CD4-positive, alpha-beta memory T cell (primary cell): ENCODE measurements at regions of chr6 and their contacts with region 1.

Region 1: DNA sequence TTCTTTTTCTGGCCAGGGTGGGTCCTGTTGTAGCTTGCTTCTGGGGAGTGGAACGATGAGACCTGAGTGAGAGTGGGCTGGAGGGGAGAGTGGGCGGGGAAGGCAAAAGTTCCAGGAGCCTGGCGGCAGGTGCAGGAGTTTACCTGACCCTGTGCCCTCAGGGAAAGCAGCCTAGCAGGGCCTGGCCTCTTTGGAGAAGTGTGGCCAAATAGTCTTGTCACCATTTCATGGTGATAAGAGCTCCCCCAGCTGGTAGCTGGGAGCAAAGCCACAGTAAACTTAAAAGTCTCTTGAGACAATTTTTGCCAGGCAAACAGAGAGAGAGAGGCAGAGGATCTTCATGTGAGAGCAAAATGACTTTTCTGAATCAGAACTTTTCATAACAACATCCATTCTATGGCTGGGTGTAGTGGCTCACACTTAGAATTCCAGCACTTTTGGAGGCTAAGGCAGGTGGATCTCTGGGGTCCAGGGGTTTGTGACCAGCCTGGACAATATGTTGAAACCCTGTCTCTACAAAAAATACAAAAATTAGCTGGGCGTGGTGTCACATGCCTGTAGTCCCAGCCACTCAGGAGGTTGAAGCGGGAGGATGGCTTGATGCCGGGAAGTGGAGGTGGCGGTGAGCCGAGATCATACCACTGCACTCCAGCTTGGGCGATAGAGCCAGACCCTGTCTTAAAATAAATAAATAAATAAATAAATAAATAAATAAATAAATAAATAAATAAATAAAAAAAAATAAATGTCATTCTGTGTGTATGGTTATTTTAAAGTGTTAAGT is 161.8 kb upstream of the SCGN start:
- DNase-seq: peak; percentile 60 to 68 (median 63)
- H3K4me3 ChIP-seq: no peak overlapping the region
- H3K4me3 Mint-ChIP-seq: no peak overlapping the region
- H3K27ac ChIP-seq: no peak overlapping the region
- H3K27ac Mint-ChIP-seq: peak overlapping the region in 2 of 7 donors; percentile 62 to 79
- H3K4me1 ChIP-seq: no peaks in the 10 kb centered on the region
- H3K4me1 Mint-ChIP-seq: peaks cover 0 to 9% (median 3%) of the 10 kb centered on the region in 4 donors
- H3K27me3 ChIP-seq: no peaks in the 10 kb centered on the region
- H3K27me3 Mint-ChIP-seq: no peaks in the 10 kb centered on the region

Region 2: DNA sequence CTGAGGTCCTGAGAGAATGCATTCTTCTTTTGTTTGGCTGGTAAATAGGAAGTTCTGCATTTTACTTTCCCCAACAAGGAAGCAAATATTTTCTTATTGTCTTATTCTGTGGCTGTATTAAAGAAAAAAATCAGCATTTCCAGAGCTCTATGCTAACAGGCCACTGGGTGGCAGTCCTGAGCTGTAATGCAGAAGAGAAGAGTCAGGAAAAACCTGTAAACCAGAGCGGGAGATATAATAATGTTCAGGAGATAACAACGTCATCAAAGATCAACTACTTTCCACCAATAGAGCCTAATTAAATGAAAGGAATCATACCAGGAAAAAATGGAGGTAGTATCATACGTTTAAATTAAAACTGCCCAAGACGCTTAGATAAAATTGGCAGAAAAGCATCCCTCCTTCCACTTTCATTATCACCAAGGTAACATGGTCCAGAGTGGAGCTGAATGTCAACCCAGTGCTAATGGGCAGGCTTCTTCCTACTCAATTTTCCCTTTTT is 266.7 kb before region 1 on chr6:
- CTCF ChIA-PET with region 1: interaction called, 28 read pairs
- POLR2A ChIA-PET with region 1: no interaction called
- intact Hi-C with region 1: loop called (anchors 1 kb)
- DNase-seq: peak; percentile 50 to 56 (median 54)
- H3K4me3 ChIP-seq: no peak overlapping the region
- H3K4me3 Mint-ChIP-seq: peak overlapping the region; percentile 40 to 74 (median 56)
- H3K27ac ChIP-seq: no peak overlapping the region
- H3K27ac Mint-ChIP-seq: peak overlapping the region in 2 of 7 donors; percentile 1 to 4
- H3K4me1 ChIP-seq: peaks cover 5% of the 10 kb centered on the region
- H3K4me1 Mint-ChIP-seq: peaks cover 2 to 9% (median 7%) of the 10 kb centered on the region in 4 donors
- H3K27me3 ChIP-seq: no peaks in the 10 kb centered on the region
- H3K27me3 Mint-ChIP-seq: peaks cover 3 to 6% of the 10 kb centered on the region in 2 donors

Region 3: GRCh38 chr6:25270559-25270958 is 219.7 kb before region 1 on chr6:
- CTCF ChIA-PET with region 1: interaction called, 202 read pairs
- POLR2A ChIA-PET with region 1: interaction called, 6 read pairs
- intact Hi-C with region 1: loop called (anchors 1 kb)
- DNase-seq: no peak
- H3K4me3 ChIP-seq: no peak overlapping the region
- H3K4me3 Mint-ChIP-seq: no peak overlapping the region
- H3K27ac ChIP-seq: no peak overlapping the region
- H3K27ac Mint-ChIP-seq: peak overlapping the region in 1 of 7 donors; percentile 36
- H3K4me1 ChIP-seq: no peaks in the 10 kb centered on the region
- H3K4me1 Mint-ChIP-seq: peaks cover under 1 to 2% (median 2%) of the 10 kb centered on the region in 4 donors
- H3K27me3 ChIP-seq: no peaks in the 10 kb centered on the region
- H3K27me3 Mint-ChIP-seq: peaks cover 14 to 26% of the 10 kb centered on the region in 2 donors

Region 4: DNA sequence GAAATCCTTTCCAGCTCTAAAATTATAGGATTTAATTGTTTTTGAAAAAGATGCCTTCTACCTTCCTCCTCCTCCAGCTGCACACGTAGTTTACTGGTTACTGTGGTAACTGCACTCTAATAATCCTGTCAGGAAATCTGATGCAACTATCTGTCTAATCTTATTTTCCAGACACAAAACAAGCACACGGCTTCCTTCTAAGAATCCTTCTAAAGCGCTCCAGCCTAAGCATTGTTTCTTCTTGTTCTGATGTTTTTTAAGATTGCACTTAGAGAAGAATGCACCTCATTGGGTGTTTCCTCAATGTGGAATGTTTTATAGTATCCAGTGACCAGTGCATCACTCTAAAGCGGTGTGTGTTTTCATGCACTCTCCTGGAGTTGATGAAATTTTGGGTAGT is 147.4 kb before region 1 on chr6:
- CTCF ChIA-PET with region 1: interaction called, 26 read pairs
- POLR2A ChIA-PET with region 1: no interaction called
- intact Hi-C with region 1: loop called (anchors 5 kb)
- DNase-seq: no peak
- H3K4me3 ChIP-seq: no peak overlapping the region
- H3K4me3 Mint-ChIP-seq: no peak overlapping the region
- H3K27ac ChIP-seq: no peak overlapping the region
- H3K27ac Mint-ChIP-seq: no peak overlapping the region
- H3K4me1 ChIP-seq: no peaks in the 10 kb centered on the region
- H3K4me1 Mint-ChIP-seq: peaks cover 0 to 17% (median 4%) of the 10 kb centered on the region in 4 donors
- H3K27me3 ChIP-seq: no peaks in the 10 kb centered on the region
- H3K27me3 Mint-ChIP-seq: peaks cover 0 to 5% of the 10 kb centered on the region in 2 donors

Region 5: GRCh38 chr6:25404693-25405169 is 85.5 kb before region 1 on chr6:
- CTCF ChIA-PET with region 1: interaction called, 16 read pairs
- POLR2A ChIA-PET with region 1: interaction called, 3 read pairs
- intact Hi-C with region 1: no loop called
- DNase-seq: peak in 4 of 5 donors; percentile 37 to 58 (median 37)
- H3K4me3 ChIP-seq: peak overlapping the region; percentile 9 to 36
- H3K4me3 Mint-ChIP-seq: no peak overlapping the region
- H3K27ac ChIP-seq: peak overlapping the region; percentile 45
- H3K27ac Mint-ChIP-seq: no peak overlapping the region
- H3K4me1 ChIP-seq: peaks cover 35% of the 10 kb centered on the region
- H3K4me1 Mint-ChIP-seq: peaks cover 0 to 26% (median 13%) of the 10 kb centered on the region in 4 donors
- H3K27me3 ChIP-seq: no peaks in the 10 kb centered on the region
- H3K27me3 Mint-ChIP-seq: no peaks in the 10 kb centered on the region

Region 6: DNA sequence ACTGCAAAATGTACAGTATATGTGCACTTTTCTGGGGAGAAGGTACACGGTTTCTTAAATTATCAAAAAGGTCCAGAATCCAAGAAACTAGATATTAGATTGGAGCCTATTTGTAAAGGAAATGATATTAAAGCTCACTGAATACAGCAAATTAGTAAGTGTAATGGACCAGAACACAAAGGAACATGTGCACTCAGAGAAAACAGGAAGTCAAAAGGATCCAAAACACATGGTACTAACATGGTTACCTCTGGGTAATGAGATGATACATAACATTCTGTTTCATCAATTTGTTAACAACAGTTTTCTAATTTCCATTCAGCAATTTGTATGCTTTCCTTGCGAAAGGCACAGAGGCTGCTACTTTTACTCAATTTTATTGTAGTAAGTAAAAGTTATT is 1150.6 kb after region 1 on chr6:
- CTCF ChIA-PET with region 1: no interaction called
- POLR2A ChIA-PET with region 1: no interaction called
- intact Hi-C with region 1: no loop called
- DNase-seq: no peak
- H3K4me3 ChIP-seq: no peak overlapping the region
- H3K4me3 Mint-ChIP-seq: no peak overlapping the region
- H3K27ac ChIP-seq: no peak overlapping the region
- H3K27ac Mint-ChIP-seq: no peak overlapping the region
- H3K4me1 ChIP-seq: no peaks in the 10 kb centered on the region
- H3K4me1 Mint-ChIP-seq: peaks cover 0 to 3% (median 0%) of the 10 kb centered on the region in 4 donors
- H3K27me3 ChIP-seq: no peaks in the 10 kb centered on the region
- H3K27me3 Mint-ChIP-seq: no peaks in the 10 kb centered on the region